Naive thymus-derived CD8-positive, alpha-beta T cell (primary cell): ENCODE measurements at regions of chr17 and their contacts with region 1.

Region 1: GRCh38 chr17:51270636-51271035 is 10.3 kb downstream of the UTP18 start:
- DNase-seq: no peak
- ATAC-seq: no peak
- H3K4me3 Mint-ChIP-seq: no peak overlapping the region
- H3K27ac Mint-ChIP-seq: no peak overlapping the region
- H3K4me1 Mint-ChIP-seq: peaks cover 27 to 50% (median 45%) of the 10 kb centered on the region in 4 donors
- H3K27me3 Mint-ChIP-seq: no peaks in the 10 kb centered on the region

Region 2: GRCh38 chr17:51147650-51148049 is 123.0 kb before region 1 on chr17:
- POLR2A ChIA-PET with region 1: no interaction called
- DNase-seq: no peak
- ATAC-seq: no peak
- H3K4me3 Mint-ChIP-seq: no peak overlapping the region
- H3K27ac Mint-ChIP-seq: no peak overlapping the region
- H3K4me1 Mint-ChIP-seq: no peaks in the 10 kb centered on the region
- H3K27me3 Mint-ChIP-seq: no peaks in the 10 kb centered on the region

Region 3: DNA sequence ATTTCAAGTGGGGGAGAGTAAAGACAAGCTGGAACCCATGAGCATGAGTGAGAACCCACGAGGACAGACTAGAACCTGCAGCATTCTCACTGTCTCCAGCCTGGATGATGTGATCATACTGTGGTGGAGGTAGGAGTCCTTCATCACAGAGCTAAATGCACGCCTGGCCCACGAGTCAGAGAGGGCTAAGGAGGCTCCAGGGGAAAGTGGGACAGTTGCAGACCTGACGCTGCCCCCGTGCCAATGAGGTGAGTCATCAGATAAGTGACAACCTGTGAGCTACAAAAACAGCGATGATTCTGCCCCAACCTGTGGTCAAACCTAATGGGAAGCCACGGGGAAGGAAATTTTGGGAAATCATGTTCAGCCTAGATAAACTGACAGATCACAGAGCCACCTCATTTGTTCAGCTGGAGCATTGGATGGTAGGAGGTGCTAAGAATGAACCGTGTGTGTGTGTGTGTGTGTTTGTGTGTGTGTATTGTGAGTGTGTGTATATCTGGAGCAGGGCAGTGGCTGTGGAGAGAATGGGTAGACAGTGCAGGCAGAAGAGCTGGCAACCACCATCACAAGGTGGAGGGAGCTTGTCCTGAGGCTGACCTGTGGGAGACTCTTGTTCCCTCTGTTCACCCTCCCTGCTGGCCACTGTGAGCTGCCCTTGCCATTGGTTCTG is 121.5 kb after region 1 on chr17:
- POLR2A ChIA-PET with region 1: interaction called, 10 read pairs
- DNase-seq: no peak
- ATAC-seq: no peak
- H3K4me3 Mint-ChIP-seq: no peak overlapping the region
- H3K27ac Mint-ChIP-seq: no peak overlapping the region
- H3K4me1 Mint-ChIP-seq: no peaks in the 10 kb centered on the region
- H3K27me3 Mint-ChIP-seq: peaks cover 0 to 19% (median 6%) of the 10 kb centered on the region in 5 donors